GM10248 (cell line): ENCODE measurements at regions of chr3 and their contacts with region 1.

Region 1: DNA sequence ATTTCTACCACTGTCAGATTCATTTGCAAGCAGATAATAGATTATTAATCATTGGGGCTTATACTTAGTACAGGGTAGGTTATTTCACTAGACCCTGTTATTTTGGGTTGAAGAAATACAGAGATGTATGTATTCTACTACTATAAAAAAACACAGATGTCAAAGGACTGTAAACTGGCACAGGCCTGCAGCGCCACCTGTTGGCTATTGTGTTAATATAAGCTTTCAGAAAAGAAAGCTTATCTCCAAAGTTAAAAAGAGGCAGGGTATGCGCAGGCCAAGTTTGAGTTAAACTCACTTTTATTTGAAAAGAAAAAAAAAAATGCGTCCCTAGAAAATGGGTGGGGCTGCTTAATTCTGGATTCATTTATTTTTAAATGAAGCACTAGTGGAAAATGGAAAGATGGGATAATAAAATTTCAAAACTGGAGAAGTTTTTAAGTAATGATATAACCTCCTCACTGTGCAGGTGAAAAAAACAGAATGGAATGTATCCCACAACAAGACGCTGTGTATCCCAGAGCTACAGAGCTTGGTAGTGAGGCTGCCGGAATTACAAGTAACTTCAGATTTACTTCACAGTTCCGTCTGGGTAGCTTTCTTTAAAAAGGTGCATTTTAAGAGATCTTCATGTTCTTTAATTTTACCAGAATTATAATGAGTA is 407.2 kb upstream of the TGFBR2 start:
- DNase-seq: peak; percentile 28
- CTCF ChIP-seq: peak; percentile 78

Region 2: GRCh38 chr3:28916713-28917499 is 1282.3 kb before region 1 on chr3:
- CTCF ChIA-PET with region 1: interaction called, 11 read pairs
- POLR2A ChIA-PET with region 1: no interaction called
- DNase-seq: peak; percentile 28
- CTCF ChIP-seq: peak; percentile 64

Region 3: DNA sequence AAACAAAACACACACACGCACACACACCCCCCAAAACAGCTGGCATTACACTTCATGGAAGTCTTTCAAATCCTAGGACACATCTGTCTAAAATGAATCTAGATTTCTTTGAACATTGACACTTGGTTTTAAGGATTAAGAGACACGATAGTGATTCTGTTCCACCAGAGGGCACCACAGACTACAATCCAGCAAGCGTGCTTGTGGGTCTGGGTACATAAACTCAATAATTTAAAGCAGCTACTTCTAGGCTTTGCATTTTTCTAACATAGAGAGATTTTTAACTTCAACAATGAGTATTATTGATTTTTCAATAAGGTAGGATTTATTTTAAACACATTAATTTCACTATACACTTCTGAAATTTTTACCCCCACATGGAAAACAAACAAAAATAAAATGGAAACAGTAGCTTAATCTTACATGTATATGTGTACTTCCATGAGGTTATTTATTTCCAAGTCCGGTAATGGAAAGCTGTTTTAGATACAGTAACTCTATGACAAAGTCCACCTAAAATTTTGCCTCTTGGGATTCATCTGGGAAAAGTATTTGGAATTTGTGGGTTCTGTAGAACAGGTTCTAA is 156.9 kb before region 1 on chr3:
- CTCF ChIA-PET with region 1: interaction called, 45 read pairs
- POLR2A ChIA-PET with region 1: no interaction called
- DNase-seq: peak; percentile 24
- CTCF ChIP-seq: peak; percentile 48

Region 4: GRCh38 chr3:30161375-30161774 is 37.9 kb before region 1 on chr3:
- CTCF ChIA-PET with region 1: interaction called, 16 read pairs
- POLR2A ChIA-PET with region 1: no interaction called
- DNase-seq: no peak
- CTCF ChIP-seq: no peak

Region 5: DNA sequence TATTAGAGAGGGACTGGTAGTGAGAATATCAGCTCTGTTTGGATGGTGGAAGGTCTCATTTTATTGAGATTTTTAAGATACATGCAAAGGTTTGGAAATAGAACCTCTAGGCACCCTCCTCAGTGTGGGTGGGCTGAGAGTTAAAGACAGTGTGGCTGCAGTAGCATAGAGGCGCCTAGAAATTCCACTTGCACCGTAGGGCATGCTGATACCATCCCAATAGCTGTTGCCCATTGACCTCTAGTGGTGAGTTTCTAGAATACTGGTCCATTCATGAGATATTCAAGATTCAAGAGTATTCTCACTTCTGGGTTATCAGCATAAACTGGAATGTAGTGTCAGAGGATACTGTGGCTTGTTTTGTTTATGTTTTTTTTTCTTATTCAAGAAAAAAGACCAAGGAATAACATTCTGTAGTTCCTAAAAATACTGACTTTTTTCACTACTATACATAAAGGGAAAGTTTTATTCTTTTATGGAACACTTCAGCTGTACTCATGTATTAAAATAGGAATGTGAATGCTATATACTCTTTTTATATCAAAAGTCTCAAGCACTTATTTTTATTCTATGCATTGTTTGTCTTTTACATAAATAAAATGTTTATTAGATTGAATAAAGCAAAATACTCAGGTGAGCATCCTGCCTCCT is 494.4 kb after region 1 on chr3:
- CTCF ChIA-PET with region 1: interaction called, 23 read pairs
- POLR2A ChIA-PET with region 1: no interaction called
- DNase-seq: peak; percentile 48
- CTCF ChIP-seq: peak; percentile 57